ENCODE measurements at regions of chr1 and their contacts with region 1.

Region 1: GRCh38 chr1:110787328-110788071 is 85.4 kb upstream of the CD53 start:
- DNase-seq: peak; percentile 88
- ATAC-seq: peak; percentile 78
- H3K4me3 ChIP-seq: peak overlapping the region; percentile 9 to 57 (median 40)
- H3K4me3 Mint-ChIP-seq: peak overlapping the region; percentile 75
- H3K27ac ChIP-seq: peak overlapping the region; percentile 63 to 90
- H3K27ac Mint-ChIP-seq: peak overlapping the region; percentile 99
- H3K4me1 ChIP-seq: peaks cover 56% of the 10 kb centered on the region in 2 donors
- H3K4me1 Mint-ChIP-seq: peaks cover 65% of the 10 kb centered on the region
- H3K27me3 ChIP-seq: no peaks in the 10 kb centered on the region
- H3K27me3 Mint-ChIP-seq: no peaks in the 10 kb centered on the region
- CTCF ChIP-seq: no peak

Region 2: DNA sequence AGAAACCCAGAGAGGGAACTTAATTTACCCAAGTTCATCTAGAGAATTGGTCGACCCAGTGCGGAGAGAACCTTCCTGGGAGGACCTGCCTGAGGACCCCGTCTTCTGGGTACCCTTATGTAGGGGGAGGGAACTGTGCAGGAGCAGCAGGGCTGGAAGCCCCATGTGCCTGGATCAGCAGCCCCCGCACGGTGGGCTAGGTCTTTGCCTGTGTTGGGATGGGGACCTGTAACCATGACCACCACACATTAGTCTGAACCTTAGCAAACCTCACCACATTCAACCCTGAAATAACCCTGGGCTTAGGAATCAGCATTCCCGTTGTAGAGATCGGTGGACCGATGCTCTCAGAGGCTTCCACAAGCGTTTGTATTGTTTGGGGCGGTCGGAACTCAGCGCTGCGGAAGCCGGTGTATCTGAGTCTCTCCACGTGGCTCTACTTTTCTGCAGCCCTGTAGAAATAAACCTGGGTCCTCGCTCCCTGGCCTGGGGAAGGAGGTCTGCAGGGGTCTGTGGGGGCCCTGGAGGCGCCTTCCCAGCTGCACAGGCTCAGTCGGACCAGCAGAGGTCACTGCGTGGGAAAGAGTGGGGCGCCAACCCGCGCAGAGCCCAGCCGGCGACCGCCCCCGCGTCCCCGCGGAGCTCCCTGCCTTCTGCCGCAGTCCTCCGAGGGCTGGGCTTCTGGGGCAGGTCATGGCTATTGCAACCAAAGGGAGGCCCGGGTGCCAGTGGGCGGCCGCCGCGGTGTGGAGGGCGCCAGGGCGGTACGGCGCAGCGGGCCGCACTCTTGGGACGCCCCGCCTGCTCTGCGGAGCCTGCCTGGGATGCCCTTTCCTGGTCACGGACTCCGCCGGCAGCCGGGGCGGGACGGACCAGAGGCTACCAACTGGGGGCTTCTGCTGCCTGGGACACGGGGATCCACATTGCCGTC is 232.4 kb before region 1 on chr1:
- CTCF ChIA-PET with region 1: interaction called, 73 read pairs
- POLR2A ChIA-PET with region 1: no interaction called
- intact Hi-C with region 1: loop called (anchors 1 kb)
- DNase-seq: peak; percentile 74
- ATAC-seq: peak; percentile 93
- H3K4me3 ChIP-seq: peak overlapping the region in 2 of 5 experiments; percentile 20 to 27
- H3K4me3 Mint-ChIP-seq: peak overlapping the region; percentile 50
- H3K27ac ChIP-seq: no peak overlapping the region
- H3K27ac Mint-ChIP-seq: no peak overlapping the region
- H3K4me1 ChIP-seq: peaks cover 9 to 12% of the 10 kb centered on the region in 2 donors
- H3K4me1 Mint-ChIP-seq: peaks cover 4% of the 10 kb centered on the region
- H3K27me3 ChIP-seq: peaks cover 0 to 57% (median 24%) of the 10 kb centered on the region in 4 experiments
- H3K27me3 Mint-ChIP-seq: peaks cover 78% of the 10 kb centered on the region
- CTCF ChIP-seq: peak; percentile 83

Region 3: GRCh38 chr1:110594456-110595352 is 192.8 kb before region 1 on chr1:
- CTCF ChIA-PET with region 1: no interaction called
- POLR2A ChIA-PET with region 1: no interaction called
- intact Hi-C with region 1: no loop called
- DNase-seq: no peak
- ATAC-seq: no peak
- H3K4me3 ChIP-seq: no peak overlapping the region
- H3K4me3 Mint-ChIP-seq: no peak overlapping the region
- H3K27ac ChIP-seq: no peak overlapping the region
- H3K27ac Mint-ChIP-seq: no peak overlapping the region
- H3K4me1 ChIP-seq: peaks cover 0 to 3% of the 10 kb centered on the region in 2 donors
- H3K4me1 Mint-ChIP-seq: peaks cover 2% of the 10 kb centered on the region
- H3K27me3 ChIP-seq: peaks cover 0 to 16% (median 4%) of the 10 kb centered on the region in 4 experiments
- H3K27me3 Mint-ChIP-seq: peaks cover 31% of the 10 kb centered on the region
- CTCF ChIP-seq: no peak

Region 4: DNA sequence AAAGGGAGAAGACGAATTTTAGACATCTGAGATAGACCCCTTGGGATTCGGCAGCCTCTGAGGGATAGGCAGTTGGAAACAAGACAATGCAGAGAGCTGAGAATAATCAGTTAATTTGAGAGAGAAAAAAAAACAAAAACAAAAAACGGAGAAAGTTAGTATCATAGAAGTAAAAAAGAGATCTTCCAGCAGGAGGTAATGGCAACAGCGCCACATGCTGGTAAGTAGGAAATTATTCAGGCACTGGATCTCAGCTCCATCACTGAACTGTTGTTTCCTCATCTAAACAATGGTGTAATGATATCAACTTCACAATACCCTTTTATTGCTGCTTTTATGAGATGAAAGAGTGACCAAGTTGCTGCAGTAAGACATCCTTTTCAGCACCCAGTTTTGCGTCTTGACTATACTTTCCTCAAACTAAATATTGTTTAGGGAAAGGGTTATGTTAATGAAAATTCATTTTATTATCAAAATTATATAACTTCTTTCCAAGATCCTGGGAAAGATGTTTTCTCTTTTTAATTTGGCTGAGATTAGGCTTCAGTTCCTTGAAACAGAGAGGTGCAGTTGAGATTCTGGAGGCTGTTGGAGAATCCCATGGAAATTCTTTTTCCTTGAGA is 21.4 kb before region 1 on chr1:
- CTCF ChIA-PET with region 1: interaction called, 111 read pairs
- POLR2A ChIA-PET with region 1: no interaction called
- intact Hi-C with region 1: no loop called
- DNase-seq: peak; percentile 77
- ATAC-seq: peak; percentile 73
- H3K4me3 ChIP-seq: no peak overlapping the region
- H3K4me3 Mint-ChIP-seq: no peak overlapping the region
- H3K27ac ChIP-seq: no peak overlapping the region
- H3K27ac Mint-ChIP-seq: no peak overlapping the region
- H3K4me1 ChIP-seq: peaks cover 0 to 3% of the 10 kb centered on the region in 2 donors
- H3K4me1 Mint-ChIP-seq: peaks cover 2% of the 10 kb centered on the region
- H3K27me3 ChIP-seq: peaks cover 0 to 8% (median 3%) of the 10 kb centered on the region in 4 experiments
- H3K27me3 Mint-ChIP-seq: peaks cover 17% of the 10 kb centered on the region
- CTCF ChIP-seq: peak; percentile 92

Region 5: DNA sequence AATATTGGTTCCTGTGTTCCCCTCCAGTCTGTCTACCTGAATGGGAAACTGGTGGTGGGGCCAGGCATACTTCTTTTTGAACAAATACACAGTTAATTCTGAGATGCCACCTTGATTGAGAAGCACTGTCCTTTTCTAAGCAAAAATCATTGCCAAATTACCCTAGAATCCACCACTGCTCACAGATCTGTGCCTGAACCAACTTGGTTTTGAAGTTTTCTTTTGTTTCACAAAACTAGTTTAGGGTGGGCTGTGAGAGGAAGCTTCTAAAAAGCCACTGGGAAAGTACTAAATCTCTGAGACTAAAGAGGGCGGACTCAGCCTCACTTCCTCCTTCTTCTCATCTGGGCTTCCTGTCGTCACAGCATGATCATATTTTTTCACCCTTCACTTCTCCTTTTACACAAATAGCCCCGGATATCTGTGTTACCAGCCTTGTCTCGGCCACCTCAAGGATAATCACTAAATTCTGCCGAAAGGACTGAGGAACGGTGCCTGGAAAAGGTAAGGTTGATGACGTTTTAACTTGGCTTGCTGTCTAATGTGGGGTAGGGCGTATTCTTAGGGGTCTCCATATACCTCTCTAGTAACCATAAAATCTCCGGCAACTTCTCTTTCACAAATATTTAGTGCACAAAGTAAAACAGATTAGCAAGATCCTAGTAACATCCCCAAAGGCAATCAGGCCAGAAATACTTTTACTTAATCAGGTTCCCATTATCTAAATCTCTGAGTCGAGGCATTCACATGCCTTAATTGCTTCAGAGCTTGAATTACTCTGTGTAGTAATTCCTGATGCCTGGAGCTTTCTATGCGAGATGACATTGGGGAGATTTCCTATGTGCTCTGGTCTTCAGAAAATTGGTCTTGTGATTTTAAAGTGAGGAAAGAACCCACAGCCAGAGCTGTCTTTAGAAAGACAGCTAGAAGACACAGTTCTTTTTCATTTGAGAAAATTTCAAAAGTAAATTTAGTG is 85.5 kb after region 1 on chr1 and contains the start of gene CD53:
- CTCF ChIA-PET with region 1: interaction called, 56 read pairs
- POLR2A ChIA-PET with region 1: interaction called, 21 read pairs
- intact Hi-C with region 1: loop called (anchors 1 kb)
- DNase-seq: peak; percentile 92
- ATAC-seq: peak; percentile 66
- H3K4me3 ChIP-seq: peak within 1 kb of the TSS; percentile 73 to 100 (median 97)
- H3K4me3 Mint-ChIP-seq: peak within 1 kb of the TSS; percentile 99
- H3K27ac ChIP-seq: peak within 1 kb of the TSS; percentile 96 to 99
- H3K27ac Mint-ChIP-seq: peak within 1 kb of the TSS; percentile 99
- H3K4me1 ChIP-seq: peaks cover 60% of the 10 kb centered on the region in 2 donors
- H3K4me1 Mint-ChIP-seq: peaks cover 70% of the 10 kb centered on the region
- H3K27me3 ChIP-seq: no peaks in the 10 kb centered on the region
- H3K27me3 Mint-ChIP-seq: no peaks in the 10 kb centered on the region
- CTCF ChIP-seq: no peak
- total RNA-seq, gene CD53: 490 and 495 TPM in 2 replicates

Region 6: GRCh38 chr1:110963691-110964399 is 176.3 kb after region 1 on chr1 and contains the start of gene LRIF1:
- CTCF ChIA-PET with region 1: interaction called, 20 read pairs
- POLR2A ChIA-PET with region 1: interaction called, 9 read pairs
- intact Hi-C with region 1: loop called (anchors 2 kb)
- DNase-seq: peak; percentile 100
- ATAC-seq: peak; percentile 96
- H3K4me3 ChIP-seq: peak within 1 kb of the TSS; percentile 62 to 98 (median 82)
- H3K4me3 Mint-ChIP-seq: peak within 1 kb of the TSS; percentile 83
- H3K27ac ChIP-seq: peak within 1 kb of the TSS; percentile 95 to 98
- H3K27ac Mint-ChIP-seq: peak within 1 kb of the TSS; percentile 88
- H3K4me1 ChIP-seq: peaks cover 20 to 21% of the 10 kb centered on the region in 2 donors
- H3K4me1 Mint-ChIP-seq: peaks cover 30% of the 10 kb centered on the region
- H3K27me3 ChIP-seq: peaks cover 0 to 13% (median 7%) of the 10 kb centered on the region in 4 experiments
- H3K27me3 Mint-ChIP-seq: peaks cover 10% of the 10 kb centered on the region
- CTCF ChIP-seq: peak; percentile 60
- total RNA-seq, gene LRIF1: 22.6 and 26.5 TPM in 2 replicates

Region 7: DNA sequence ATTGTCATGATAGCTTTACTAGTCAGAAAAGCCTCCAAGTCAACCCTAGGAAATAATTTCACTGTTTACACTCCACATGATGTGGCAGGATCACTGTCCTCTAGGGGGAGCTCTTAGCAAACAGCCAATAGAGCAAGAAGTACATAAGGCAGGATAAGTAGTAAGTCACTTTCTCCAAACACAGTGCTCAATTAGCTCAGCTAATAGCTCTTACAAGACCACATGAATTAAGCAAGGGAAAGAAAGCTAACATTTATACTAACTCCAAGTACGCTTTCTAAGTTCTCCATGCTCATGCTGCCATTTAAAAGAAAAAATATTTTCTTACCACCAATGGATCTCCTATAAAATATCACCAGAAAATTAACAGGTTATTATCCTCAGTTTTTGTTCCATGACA is 243.1 kb after region 1 on chr1:
- CTCF ChIA-PET with region 1: interaction called, 10 read pairs
- POLR2A ChIA-PET with region 1: no interaction called
- intact Hi-C with region 1: loop called (anchors 5 kb)
- DNase-seq: peak; percentile 77
- ATAC-seq: peak; percentile 56
- H3K4me3 ChIP-seq: no peak overlapping the region
- H3K4me3 Mint-ChIP-seq: no peak overlapping the region
- H3K27ac ChIP-seq: no peak overlapping the region
- H3K27ac Mint-ChIP-seq: no peak overlapping the region
- H3K4me1 ChIP-seq: peaks cover 0 to 5% of the 10 kb centered on the region in 2 donors
- H3K4me1 Mint-ChIP-seq: peaks cover 15% of the 10 kb centered on the region
- H3K27me3 ChIP-seq: no peaks in the 10 kb centered on the region
- H3K27me3 Mint-ChIP-seq: peaks cover 3% of the 10 kb centered on the region
- CTCF ChIP-seq: peak; percentile 89